ENCODE measurements at regions of chr10 and their contacts with region 1.

Region 1: GRCh38 chr10:63720072-63720537 is 198.9 kb downstream of the REEP3 start:
- DNase-seq: no peak
- ATAC-seq: peak; percentile 94
- H3K4me3 Mint-ChIP-seq: no peak overlapping the region
- H3K27ac Mint-ChIP-seq: no peak overlapping the region
- H3K4me1 Mint-ChIP-seq: peaks cover 12% of the 10 kb centered on the region
- H3K27me3 Mint-ChIP-seq: peaks cover 12% of the 10 kb centered on the region
- CTCF ChIP-seq: peak; percentile 100

Region 2: DNA sequence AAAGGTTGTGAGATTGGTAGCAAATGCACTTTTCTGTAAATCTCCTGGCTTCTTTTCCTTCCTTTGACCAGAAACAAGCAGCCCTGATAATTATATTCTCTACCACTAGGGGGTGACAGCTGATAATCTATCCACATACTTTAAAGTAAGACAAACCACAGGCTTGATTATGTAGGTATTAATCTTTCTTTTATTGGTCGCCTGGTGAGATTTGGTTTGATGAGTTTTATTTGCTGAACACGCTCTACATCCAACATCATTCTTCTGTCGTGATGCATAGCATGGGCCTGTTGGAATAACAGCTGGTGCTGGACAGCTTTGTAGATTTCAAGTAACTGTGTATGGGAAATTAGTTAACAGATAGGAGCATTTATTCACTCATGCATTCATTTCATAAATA is 1282.4 kb before region 1 on chr10:
- CTCF ChIA-PET with region 1: no interaction called
- POLR2A ChIA-PET with region 1: no interaction called
- intact Hi-C with region 1: loop called (anchors 1 kb)
- DNase-seq: no peak
- ATAC-seq: peak; percentile 70
- H3K4me3 Mint-ChIP-seq: no peak overlapping the region
- H3K27ac Mint-ChIP-seq: no peak overlapping the region
- H3K4me1 Mint-ChIP-seq: peaks cover 2% of the 10 kb centered on the region
- H3K27me3 Mint-ChIP-seq: no peaks in the 10 kb centered on the region
- CTCF ChIP-seq: peak; percentile 90

Region 3: DNA sequence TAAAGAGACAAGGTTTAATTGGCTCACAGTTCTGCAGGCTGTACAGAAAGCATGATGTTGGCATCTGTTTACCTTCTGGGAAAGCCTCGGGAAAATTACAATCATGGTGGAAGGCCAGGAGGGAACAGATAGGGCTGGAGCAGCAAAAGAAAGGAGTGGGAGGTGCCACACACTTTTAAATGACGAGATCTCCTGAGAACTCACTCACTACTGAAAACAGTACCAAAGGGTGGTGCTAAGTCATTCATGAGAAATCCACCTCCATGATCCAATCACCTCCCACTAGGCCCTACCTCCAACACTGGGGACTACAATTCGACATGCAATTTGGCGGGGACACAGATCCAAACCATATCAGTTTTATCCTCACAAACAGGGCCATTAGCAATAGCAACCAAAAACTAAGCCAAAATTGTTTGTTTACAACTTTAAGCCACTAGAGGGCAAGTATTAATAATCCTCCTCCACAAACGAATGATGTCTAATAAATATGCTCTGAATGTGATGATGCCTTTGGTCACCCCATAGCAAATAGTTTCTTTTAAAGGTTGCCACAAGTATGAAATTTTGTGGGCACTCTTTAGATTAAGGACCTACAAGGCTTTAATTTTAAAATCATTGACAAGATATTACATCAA is 716.2 kb before region 1 on chr10:
- CTCF ChIA-PET with region 1: interaction called, 3 read pairs
- POLR2A ChIA-PET with region 1: no interaction called
- intact Hi-C with region 1: loop called (anchors 2 kb)
- DNase-seq: no peak
- ATAC-seq: no peak
- H3K4me3 Mint-ChIP-seq: no peak overlapping the region
- H3K27ac Mint-ChIP-seq: no peak overlapping the region
- H3K4me1 Mint-ChIP-seq: no peaks in the 10 kb centered on the region
- H3K27me3 Mint-ChIP-seq: peaks cover 12% of the 10 kb centered on the region
- CTCF ChIP-seq: no peak

Region 4: DNA sequence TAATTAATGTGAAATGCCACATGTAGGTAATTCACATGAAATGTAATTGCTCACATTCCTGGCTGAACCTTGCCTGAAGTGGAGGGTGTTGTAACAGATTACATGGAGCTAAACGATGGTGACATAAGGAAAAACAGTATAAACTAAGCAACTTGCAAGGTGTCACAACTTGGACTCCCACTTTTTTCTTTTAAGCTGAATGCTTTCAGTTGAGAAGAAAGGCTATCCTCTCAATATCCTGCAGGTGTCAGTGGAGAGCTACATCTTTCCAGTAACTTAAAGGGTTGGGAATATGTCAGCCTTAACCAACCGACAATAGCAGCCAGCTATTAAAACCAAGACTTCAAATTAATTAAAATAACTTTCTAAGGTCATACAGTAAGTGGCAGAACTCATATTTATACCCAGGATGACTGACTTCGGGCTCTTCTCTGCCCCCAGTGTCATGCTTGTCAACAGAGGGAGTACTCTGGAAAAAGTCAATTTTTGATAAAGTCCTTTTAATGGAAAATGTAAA is 553.3 kb before region 1 on chr10:
- CTCF ChIA-PET with region 1: interaction called, 246 read pairs
- POLR2A ChIA-PET with region 1: interaction called, 9 read pairs
- intact Hi-C with region 1: loop called (anchors 1 kb)
- DNase-seq: no peak
- ATAC-seq: peak; percentile 88
- H3K4me3 Mint-ChIP-seq: no peak overlapping the region
- H3K27ac Mint-ChIP-seq: peak overlapping the region; percentile 12
- H3K4me1 Mint-ChIP-seq: peaks cover 4% of the 10 kb centered on the region
- H3K27me3 Mint-ChIP-seq: no peaks in the 10 kb centered on the region
- CTCF ChIP-seq: no peak

Region 5: GRCh38 chr10:63217120-63217605 is 502.9 kb before region 1 on chr10:
- CTCF ChIA-PET with region 1: interaction called, 49 read pairs
- POLR2A ChIA-PET with region 1: no interaction called
- intact Hi-C with region 1: loop called (anchors 1 kb)
- DNase-seq: no peak
- ATAC-seq: peak; percentile 89
- H3K4me3 Mint-ChIP-seq: no peak overlapping the region
- H3K27ac Mint-ChIP-seq: peak overlapping the region; percentile 41
- H3K4me1 Mint-ChIP-seq: peaks cover 60% of the 10 kb centered on the region
- H3K27me3 Mint-ChIP-seq: no peaks in the 10 kb centered on the region
- CTCF ChIP-seq: no peak

Region 6: GRCh38 chr10:63421591-63421990 is 298.5 kb before region 1 on chr10:
- CTCF ChIA-PET with region 1: no interaction called
- POLR2A ChIA-PET with region 1: no interaction called
- intact Hi-C with region 1: no loop called
- DNase-seq: no peak
- ATAC-seq: peak; percentile 98
- H3K4me3 Mint-ChIP-seq: peak overlapping the region; percentile 30
- H3K27ac Mint-ChIP-seq: peak overlapping the region; percentile 87
- H3K4me1 Mint-ChIP-seq: peaks cover 29% of the 10 kb centered on the region
- H3K27me3 Mint-ChIP-seq: no peaks in the 10 kb centered on the region
- CTCF ChIP-seq: no peak

Region 7: GRCh38 chr10:63521416-63522276 is 198.5 kb before region 1 on chr10:
- CTCF ChIA-PET with region 1: interaction called, 3 read pairs
- POLR2A ChIA-PET with region 1: interaction called, 3 read pairs
- intact Hi-C with region 1: loop called (anchors 5 kb)
- DNase-seq: peak; percentile 72
- ATAC-seq: peak; percentile 70
- H3K4me3 Mint-ChIP-seq: peak overlapping the region; percentile 86
- H3K27ac Mint-ChIP-seq: peak overlapping the region; percentile 72
- H3K4me1 Mint-ChIP-seq: peaks cover 47% of the 10 kb centered on the region
- H3K27me3 Mint-ChIP-seq: no peaks in the 10 kb centered on the region
- CTCF ChIP-seq: no peak

Region 8: GRCh38 chr10:63965846-63966245 is 245.7 kb after region 1 on chr10:
- CTCF ChIA-PET with region 1: no interaction called
- POLR2A ChIA-PET with region 1: no interaction called
- intact Hi-C with region 1: no loop called
- DNase-seq: no peak
- ATAC-seq: no peak
- H3K4me3 Mint-ChIP-seq: no peak overlapping the region
- H3K27ac Mint-ChIP-seq: no peak overlapping the region
- H3K4me1 Mint-ChIP-seq: no peaks in the 10 kb centered on the region
- H3K27me3 Mint-ChIP-seq: peaks cover 26% of the 10 kb centered on the region
- CTCF ChIP-seq: no peak

Measured in activated B cell treated with CpG ODN at 0.5 μM for 24 hours (primary cell).